Activated CD4-positive, alpha-beta memory T cell treated with anti-CD3 and anti-CD28 coated beads for 36 hours (primary cell): ENCODE measurements at regions of chr1 and their contacts with region 1.

Region 1: GRCh38 chr1:192580351-192580962 is 4.9 kb downstream of the RGS1 start:
- DNase-seq: no peak
- H3K4me3 Mint-ChIP-seq: peak overlapping the region; percentile 24
- H3K27ac Mint-ChIP-seq: peak overlapping the region; percentile 26
- H3K4me1 Mint-ChIP-seq: peaks cover 46% of the 10 kb centered on the region
- H3K27me3 Mint-ChIP-seq: no peaks in the 10 kb centered on the region

Region 2: DNA sequence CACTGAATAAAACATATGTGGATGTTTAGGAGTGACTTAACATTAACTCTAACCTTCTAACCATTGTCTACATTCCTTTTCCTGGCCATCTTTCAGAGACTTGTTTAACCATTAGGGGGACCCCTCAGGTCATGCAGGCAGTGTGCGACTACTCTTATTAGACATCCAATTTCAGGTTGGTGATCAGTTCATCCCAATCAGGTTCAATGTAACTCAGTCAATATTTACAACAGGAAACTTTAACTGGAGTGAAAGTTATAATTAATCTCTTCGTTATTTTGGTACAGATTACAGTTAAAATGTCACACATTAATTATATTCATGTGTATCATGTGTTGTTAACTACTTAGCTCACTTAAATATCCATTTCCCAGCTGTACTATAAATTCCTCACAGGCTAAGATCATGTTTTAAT is 73.7 kb before region 1 on chr1:
- CTCF ChIA-PET with region 1: interaction called, 4 read pairs
- POLR2A ChIA-PET with region 1: no interaction called
- intact Hi-C with region 1: loop called (anchors 2 kb)
- DNase-seq: peak; percentile 23
- H3K4me3 Mint-ChIP-seq: no peak overlapping the region
- H3K27ac Mint-ChIP-seq: no peak overlapping the region
- H3K4me1 Mint-ChIP-seq: no peaks in the 10 kb centered on the region
- H3K27me3 Mint-ChIP-seq: no peaks in the 10 kb centered on the region

Region 3: GRCh38 chr1:192530254-192530653 is 50.2 kb before region 1 on chr1:
- CTCF ChIA-PET with region 1: no interaction called
- POLR2A ChIA-PET with region 1: no interaction called
- intact Hi-C with region 1: loop called (anchors 1 kb)
- DNase-seq: no peak
- H3K4me3 Mint-ChIP-seq: no peak overlapping the region
- H3K27ac Mint-ChIP-seq: peak overlapping the region; percentile 47
- H3K4me1 Mint-ChIP-seq: peaks cover 27% of the 10 kb centered on the region
- H3K27me3 Mint-ChIP-seq: peaks cover 3% of the 10 kb centered on the region

Region 4: DNA sequence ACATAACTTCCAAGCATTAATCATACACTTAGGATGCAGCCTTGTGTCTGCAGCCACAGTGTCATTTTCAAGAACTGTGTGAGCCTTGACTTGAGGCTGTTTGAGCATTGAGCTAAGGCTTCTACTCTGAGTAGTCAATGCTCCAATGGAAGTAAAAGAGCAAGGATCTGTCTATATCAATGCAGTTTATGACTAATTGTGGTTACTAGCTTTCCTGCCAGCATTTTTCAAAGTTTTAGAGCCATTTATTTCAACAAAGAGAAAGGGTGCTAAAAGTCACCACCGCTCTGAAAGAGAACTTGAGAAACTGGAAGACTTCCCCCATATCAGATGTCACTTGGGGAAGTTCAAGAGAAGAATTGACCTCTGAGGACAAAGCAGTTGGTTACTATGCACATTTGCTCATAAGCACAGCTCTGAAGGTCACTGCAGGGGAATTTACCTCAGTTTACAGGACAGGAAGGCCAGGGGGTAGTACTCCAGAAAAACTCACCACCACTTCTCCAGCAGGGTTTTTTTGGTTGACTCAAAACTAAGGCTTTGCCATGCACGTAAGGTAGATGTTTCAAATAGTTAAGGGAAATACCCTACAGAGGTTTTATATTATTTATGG is 29.4 kb before region 1 on chr1:
- CTCF ChIA-PET with region 1: interaction called, 7 read pairs
- POLR2A ChIA-PET with region 1: interaction called, 21 read pairs
- intact Hi-C with region 1: loop called (anchors 1 kb)
- DNase-seq: peak; percentile 27
- H3K4me3 Mint-ChIP-seq: peak overlapping the region; percentile 12
- H3K27ac Mint-ChIP-seq: peak overlapping the region; percentile 81
- H3K4me1 Mint-ChIP-seq: peaks cover 55% of the 10 kb centered on the region
- H3K27me3 Mint-ChIP-seq: no peaks in the 10 kb centered on the region

Region 5: GRCh38 chr1:192601567-192601966 is 21.1 kb after region 1 on chr1:
- CTCF ChIA-PET with region 1: interaction called, 4 read pairs
- POLR2A ChIA-PET with region 1: no interaction called
- intact Hi-C with region 1: loop called (anchors 2 kb)
- DNase-seq: no peak
- H3K4me3 Mint-ChIP-seq: no peak overlapping the region
- H3K27ac Mint-ChIP-seq: no peak overlapping the region
- H3K4me1 Mint-ChIP-seq: peaks cover 26% of the 10 kb centered on the region
- H3K27me3 Mint-ChIP-seq: no peaks in the 10 kb centered on the region

Region 6: GRCh38 chr1:193121616-193122593 is 541.4 kb after region 1 on chr1 and contains the start of gene CDC73:
- CTCF ChIA-PET with region 1: no interaction called
- POLR2A ChIA-PET with region 1: no interaction called
- intact Hi-C with region 1: loop called (anchors 5 kb)
- DNase-seq: peak; percentile 99
- H3K4me3 Mint-ChIP-seq: peak within 1 kb of the TSS; percentile 85
- H3K27ac Mint-ChIP-seq: peak within 1 kb of the TSS; percentile 98
- H3K4me1 Mint-ChIP-seq: peaks cover 45% of the 10 kb centered on the region
- H3K27me3 Mint-ChIP-seq: no peaks in the 10 kb centered on the region
- total RNA-seq, gene CDC73: 47.9 to 49.3 TPM